ENCODE measurements at regions of chr11 and their contacts with region 1.

Region 1: GRCh38 chr11:65817835-65818742 is 15.7 kb upstream of the SNX32 start:
- DNase-seq: peak; percentile 92 to 97 (median 95)
- H3K4me3 ChIP-seq: peak overlapping the region; percentile 75 to 76 (median 76)
- H3K27ac ChIP-seq: peak overlapping the region; percentile 83 to 93
- H3K4me1 ChIP-seq: peaks cover 0 to 14% (median 13%) of the 10 kb centered on the region in 3 donors
- H3K27me3 ChIP-seq: no peaks in the 10 kb centered on the region
- CTCF ChIP-seq: peak; percentile 100

Region 2: GRCh38 chr11:65477149-65477965 is 340.7 kb before region 1 on chr11:
- intact Hi-C with region 1: no loop called
- DNase-seq: peak; percentile 94 to 99 (median 97)
- H3K4me3 ChIP-seq: peak overlapping the region; percentile 76 to 94 (median 77)
- H3K27ac ChIP-seq: peak overlapping the region; percentile 100
- H3K4me1 ChIP-seq: peaks cover 4 to 23% (median 11%) of the 10 kb centered on the region in 3 donors
- H3K27me3 ChIP-seq: no peaks in the 10 kb centered on the region
- CTCF ChIP-seq: no peak

Region 3: GRCh38 chr11:65662799-65663638 is 155.1 kb before region 1 on chr11 and contains the start of gene RELA:
- intact Hi-C with region 1: no loop called
- DNase-seq: peak; percentile 93 to 98 (median 95)
- H3K4me3 ChIP-seq: peak within 1 kb of the TSS; percentile 77 to 99 (median 91)
- H3K27ac ChIP-seq: peak within 1 kb of the TSS; percentile 99
- H3K4me1 ChIP-seq: peaks cover 0 to 10% (median 6%) of the 10 kb centered on the region in 3 donors
- H3K27me3 ChIP-seq: no peaks in the 10 kb centered on the region
- CTCF ChIP-seq: no peak
- total RNA-seq, gene RELA: 81.6 TPM

Region 4: GRCh38 chr11:65711785-65712632 is 106.1 kb before region 1 on chr11 and contains the start of gene KAT5:
- intact Hi-C with region 1: loop called (anchors 10 kb)
- DNase-seq: peak; percentile 99 to 100 (median 99)
- H3K4me3 ChIP-seq: peak within 1 kb of the TSS; percentile 84 to 92 (median 89)
- H3K27ac ChIP-seq: peak within 1 kb of the TSS; percentile 100
- H3K4me1 ChIP-seq: peaks cover 0 to 7% (median 0%) of the 10 kb centered on the region in 3 donors
- H3K27me3 ChIP-seq: no peaks in the 10 kb centered on the region
- CTCF ChIP-seq: peak; percentile 99
- total RNA-seq, gene KAT5: 74.7 TPM

Region 5: GRCh38 chr11:66001942-66002647 is 184.0 kb after region 1 on chr11 and contains the starts of genes BANF1 and EIF1AD:
- intact Hi-C with region 1: no loop called
- DNase-seq: peak; percentile 95 to 99 (median 95)
- H3K4me3 ChIP-seq: peak within 1 kb of the TSS; percentile 97 to 100 (median 99)
- H3K27ac ChIP-seq: peak within 1 kb of the TSS; percentile 95 to 99
- H3K4me1 ChIP-seq: peaks cover 0 to 10% (median 0%) of the 10 kb centered on the region in 3 donors
- H3K27me3 ChIP-seq: no peaks in the 10 kb centered on the region
- CTCF ChIP-seq: no peak
- total RNA-seq, gene BANF1: 181 TPM
- total RNA-seq, gene EIF1AD: 37.5 TPM